Heart right ventricle (tissue), 16 donors: ENCODE measurements at regions of chrX and their contacts with region 1.

Region 1: DNA sequence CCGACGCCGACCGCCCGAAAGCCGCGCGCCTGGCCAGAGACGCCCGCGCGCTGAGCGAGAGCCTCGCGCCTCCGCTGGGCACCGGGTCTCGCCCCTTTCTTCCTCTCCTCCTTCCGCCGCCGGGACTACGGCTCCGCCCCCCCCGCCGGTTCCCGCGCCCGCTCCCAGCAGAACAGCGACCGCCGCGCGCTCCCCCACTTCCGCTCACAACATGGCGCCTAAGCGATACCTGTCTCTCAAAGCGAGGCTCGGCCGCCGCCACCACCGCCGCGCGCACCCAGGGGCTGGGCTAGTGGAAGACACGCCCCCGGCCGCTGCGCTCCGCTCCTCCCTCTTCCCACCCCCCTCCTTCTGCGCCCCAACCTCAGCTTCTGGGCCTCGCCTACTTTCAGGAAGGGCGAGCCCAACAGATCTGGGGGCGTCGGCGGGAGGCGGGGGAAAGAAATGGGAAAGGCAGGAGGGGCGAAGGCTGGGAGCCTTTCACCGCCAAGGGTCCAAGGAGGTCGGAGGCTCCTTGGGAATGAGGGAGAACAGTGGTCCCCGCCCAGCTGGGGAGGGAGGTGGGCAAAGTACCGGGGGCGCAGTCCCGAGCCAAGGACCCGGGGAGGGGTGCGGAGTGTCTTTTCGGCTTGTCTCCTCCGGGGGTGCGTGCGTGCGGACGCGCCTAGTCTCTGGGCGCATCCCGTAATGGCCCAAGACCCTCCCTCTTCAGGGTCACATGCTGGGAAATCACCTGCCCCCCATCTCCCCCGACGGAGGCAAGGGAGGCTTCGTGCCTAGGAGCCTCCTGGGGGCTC is at the start of gene RPS6KA3:
- DNase-seq: peak; percentile 89 to 90
- ATAC-seq: peak; percentile 93 to 98 (median 96)
- H3K4me3 ChIP-seq: peak within 1 kb of the TSS; percentile 41 to 75 (median 70)
- H3K27ac ChIP-seq: peak within 1 kb of the TSS; percentile 58 to 91 (median 84)
- H3K4me1 ChIP-seq: peaks cover 0 to 28% (median 16%) of the 10 kb centered on the region in 9 donors
- H3K27me3 ChIP-seq: peaks cover 0 to 45% (median 0%) of the 10 kb centered on the region in 7 donors
- CTCF ChIP-seq: no peak
- total RNA-seq, gene RPS6KA3: 22.4 to 42.5 (median 35.1) TPM

Region 2: DNA sequence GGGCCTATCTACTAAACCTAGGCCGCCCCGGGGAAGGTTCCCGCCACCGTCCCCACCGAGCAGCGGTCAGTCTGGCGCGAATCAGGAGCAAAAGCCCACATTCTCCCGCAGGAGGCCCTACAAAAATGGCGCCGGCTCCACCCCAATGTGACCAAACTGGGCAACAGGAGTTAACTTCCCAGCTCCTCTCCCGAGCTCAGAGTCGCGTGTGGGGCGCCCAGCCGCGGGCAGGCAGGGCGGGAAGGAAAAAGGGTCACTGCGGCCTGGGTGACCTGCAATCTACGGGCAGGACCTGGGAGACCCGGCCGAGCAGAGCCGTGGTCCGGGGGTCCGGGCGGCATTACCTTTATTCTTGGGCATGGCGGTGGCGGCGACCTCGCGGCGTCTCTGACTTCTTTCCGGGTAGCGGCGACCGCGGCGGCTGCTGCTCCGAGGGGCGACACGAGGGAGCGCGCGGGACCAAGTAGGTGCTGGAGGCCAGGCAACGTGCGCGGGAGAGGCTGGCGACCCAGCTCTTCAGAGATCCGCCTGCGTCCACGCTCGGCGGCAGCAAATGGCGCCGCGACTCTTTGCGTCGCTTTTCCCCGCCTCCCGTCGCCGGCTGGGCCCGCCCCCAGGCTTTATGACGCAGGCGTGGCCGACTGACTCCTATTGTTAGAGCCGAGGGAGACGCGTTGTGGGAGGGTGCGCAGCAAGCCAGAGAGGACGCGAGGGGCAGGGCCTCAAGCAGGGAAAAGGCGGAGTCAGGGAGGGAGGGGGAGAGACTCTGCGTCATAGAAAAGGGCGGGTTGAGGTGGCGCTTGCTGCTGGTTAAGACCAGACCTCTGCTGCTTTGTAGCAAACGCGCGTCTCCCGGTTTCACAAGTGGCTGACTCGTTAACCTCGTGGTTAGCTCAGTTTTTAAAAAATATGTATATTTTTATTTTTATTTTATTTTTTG is 125.5 kb before region 1 on chrX and contains the start of gene EIF1AX:
- intact Hi-C with region 1: loop called in 1 of 10 experiments (anchors 10 kb)
- DNase-seq: peak; percentile 94 to 96
- ATAC-seq: peak; percentile 99 to 100 (median 100)
- H3K4me3 ChIP-seq: peak within 1 kb of the TSS; percentile 75 to 90 (median 80)
- H3K27ac ChIP-seq: peak within 1 kb of the TSS in 9 of 10 donors; percentile 78 to 90 (median 89)
- H3K4me1 ChIP-seq: peaks cover 0 to 34% (median 17%) of the 10 kb centered on the region in 9 donors
- H3K27me3 ChIP-seq: peaks cover 0 to 6% (median 0%) of the 10 kb centered on the region in 7 donors
- CTCF ChIP-seq: no peak
- total RNA-seq, gene EIF1AX: 46.0 to 107 (median 59.0) TPM

Region 3: GRCh38 chrX:20217275-20217674 is 49.7 kb before region 1 on chrX:
- intact Hi-C with region 1: loop called in 2 of 10 experiments (anchors 5 kb)
- DNase-seq: no peak
- ATAC-seq: peak in 5 of 8 donors; percentile 33 to 64 (median 57)
- H3K4me3 ChIP-seq: peak overlapping the region in 9 of 10 donors; percentile 17 to 52 (median 41)
- H3K27ac ChIP-seq: peak overlapping the region in 8 of 10 donors; percentile 18 to 83 (median 68)
- H3K4me1 ChIP-seq: peaks cover 0 to 45% (median 19%) of the 10 kb centered on the region in 9 donors
- H3K27me3 ChIP-seq: peaks cover 0 to 49% (median 0%) of the 10 kb centered on the region in 7 donors
- CTCF ChIP-seq: no peak

Region 4: GRCh38 chrX:20362268-20363267 is 95.6 kb after region 1 on chrX:
- intact Hi-C with region 1: loop called in 2 of 10 experiments (anchors 5 kb)
- DNase-seq: peak in 1 of 2 donors; percentile 30
- ATAC-seq: peak; percentile 63 to 92 (median 88)
- H3K4me3 ChIP-seq: peak overlapping the region in 2 of 10 donors; percentile 14 to 18
- H3K27ac ChIP-seq: peak overlapping the region; percentile 27 to 88 (median 78)
- H3K4me1 ChIP-seq: peaks cover 0 to 29% (median 9%) of the 10 kb centered on the region in 9 donors
- H3K27me3 ChIP-seq: peaks cover 0 to 14% (median 0%) of the 10 kb centered on the region in 7 donors
- CTCF ChIP-seq: no peak

Region 5: GRCh38 chrX:20382518-20383297 is 115.7 kb after region 1 on chrX:
- intact Hi-C with region 1: loop called in 1 of 10 experiments (anchors 10 kb)
- DNase-seq: no peak
- ATAC-seq: peak in 5 of 8 donors; percentile 80 to 97 (median 94)
- H3K4me3 ChIP-seq: no peak overlapping the region
- H3K27ac ChIP-seq: peak overlapping the region in 1 of 10 donors; percentile 34
- H3K4me1 ChIP-seq: no peaks in the 10 kb centered on the region
- H3K27me3 ChIP-seq: peaks cover 0 to 24% (median 0%) of the 10 kb centered on the region in 7 donors
- CTCF ChIP-seq: no peak

Region 6: DNA sequence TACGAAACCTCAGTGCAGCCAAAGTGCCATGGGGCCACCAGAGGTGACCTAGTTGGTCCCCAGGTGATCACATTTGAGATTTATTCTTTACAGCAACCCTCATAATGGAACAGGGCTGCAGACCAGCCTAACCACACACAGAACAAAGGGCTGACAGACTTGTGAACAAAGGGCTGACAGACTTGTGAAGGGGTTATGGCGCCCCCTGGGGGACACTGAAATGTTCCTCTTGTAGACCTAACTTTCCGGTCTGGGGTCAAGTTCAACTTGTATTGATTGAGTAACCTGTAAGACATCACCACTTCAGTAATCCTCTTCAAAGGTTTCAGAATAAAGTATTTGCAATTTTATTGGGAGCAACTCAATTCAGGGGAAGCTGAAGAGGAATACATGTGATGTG is 175.6 kb after region 1 on chrX:
- intact Hi-C with region 1: loop called in 1 of 10 experiments (anchors 5 kb)
- DNase-seq: peak; percentile 63 to 75
- ATAC-seq: peak; percentile 56 to 83 (median 75)
- H3K4me3 ChIP-seq: no peak overlapping the region
- H3K27ac ChIP-seq: no peak overlapping the region
- H3K4me1 ChIP-seq: peaks cover 0 to 6% (median 0%) of the 10 kb centered on the region in 9 donors
- H3K27me3 ChIP-seq: peaks cover 0 to 8% (median 0%) of the 10 kb centered on the region in 7 donors
- CTCF ChIP-seq: peak; percentile 14 to 70 (median 66)